ENCODE measurements at regions of chr7 and their contacts with region 1.

Region 1: GRCh38 chr7:117673839-117674238 is 194.0 kb downstream of the CFTR start:
- DNase-seq: peak; percentile 37
- H3K4me3 Mint-ChIP-seq: no peak overlapping the region
- H3K27ac Mint-ChIP-seq: no peak overlapping the region
- H3K4me1 Mint-ChIP-seq: no peaks in the 10 kb centered on the region
- H3K27me3 Mint-ChIP-seq: peaks cover 39% of the 10 kb centered on the region
- CTCF ChIP-seq: peak; percentile 21

Region 2: GRCh38 chr7:117399820-117400422 is 273.9 kb before region 1 on chr7:
- CTCF ChIA-PET with region 1: no interaction called
- POLR2A ChIA-PET with region 1: no interaction called
- intact Hi-C with region 1: loop called (anchors 10 kb)
- DNase-seq: no peak
- H3K4me3 Mint-ChIP-seq: no peak overlapping the region
- H3K27ac Mint-ChIP-seq: no peak overlapping the region
- H3K4me1 Mint-ChIP-seq: no peaks in the 10 kb centered on the region
- H3K27me3 Mint-ChIP-seq: peaks cover 55% of the 10 kb centered on the region
- CTCF ChIP-seq: peak; percentile 40

Region 3: DNA sequence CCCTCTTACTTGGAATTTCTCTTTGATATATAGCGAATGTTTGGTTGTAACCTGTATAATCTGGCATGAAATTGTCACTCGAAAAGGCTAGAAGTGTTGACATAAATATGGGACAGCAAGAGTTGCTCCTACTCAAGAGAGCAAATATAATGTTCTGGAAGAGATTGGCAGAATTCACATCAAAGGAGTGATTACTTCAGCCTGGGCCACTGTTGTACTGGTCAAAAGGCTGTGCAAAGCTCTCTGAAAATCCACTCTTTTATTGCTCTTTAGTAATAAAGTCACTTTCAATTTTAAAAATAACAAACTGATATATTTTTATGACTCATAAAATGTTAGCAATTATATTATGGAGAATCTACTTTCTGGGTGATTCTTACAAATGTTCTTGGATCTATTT is 135.8 kb before region 1 on chr7:
- CTCF ChIA-PET with region 1: no interaction called
- POLR2A ChIA-PET with region 1: no interaction called
- intact Hi-C with region 1: no loop called
- DNase-seq: no peak
- H3K4me3 Mint-ChIP-seq: no peak overlapping the region
- H3K27ac Mint-ChIP-seq: no peak overlapping the region
- H3K4me1 Mint-ChIP-seq: no peaks in the 10 kb centered on the region
- H3K27me3 Mint-ChIP-seq: peaks cover 28% of the 10 kb centered on the region
- CTCF ChIP-seq: no peak

Region 4: DNA sequence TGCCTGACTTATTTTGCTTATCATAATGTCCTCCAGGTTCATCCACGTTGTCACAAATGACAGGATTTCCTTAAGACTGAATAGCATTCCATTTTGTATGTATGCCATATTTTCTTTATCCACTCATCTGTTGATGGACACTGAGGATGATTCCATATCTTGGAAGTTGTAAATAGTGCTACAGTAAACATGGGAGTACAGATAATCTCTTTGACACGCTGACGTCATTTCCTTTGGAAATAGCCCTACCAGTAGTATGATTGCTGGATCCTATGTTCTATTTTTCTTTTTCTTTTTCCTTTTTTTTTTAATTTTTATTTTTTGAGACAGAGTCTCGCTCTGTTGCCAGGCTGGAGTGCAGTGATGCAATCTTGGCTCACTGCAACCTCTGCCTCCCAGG is 31.8 kb after region 1 on chr7:
- CTCF ChIA-PET with region 1: no interaction called
- POLR2A ChIA-PET with region 1: no interaction called
- intact Hi-C with region 1: no loop called
- DNase-seq: no peak
- H3K4me3 Mint-ChIP-seq: no peak overlapping the region
- H3K27ac Mint-ChIP-seq: no peak overlapping the region
- H3K4me1 Mint-ChIP-seq: no peaks in the 10 kb centered on the region
- H3K27me3 Mint-ChIP-seq: no peaks in the 10 kb centered on the region
- CTCF ChIP-seq: no peak

Region 5: DNA sequence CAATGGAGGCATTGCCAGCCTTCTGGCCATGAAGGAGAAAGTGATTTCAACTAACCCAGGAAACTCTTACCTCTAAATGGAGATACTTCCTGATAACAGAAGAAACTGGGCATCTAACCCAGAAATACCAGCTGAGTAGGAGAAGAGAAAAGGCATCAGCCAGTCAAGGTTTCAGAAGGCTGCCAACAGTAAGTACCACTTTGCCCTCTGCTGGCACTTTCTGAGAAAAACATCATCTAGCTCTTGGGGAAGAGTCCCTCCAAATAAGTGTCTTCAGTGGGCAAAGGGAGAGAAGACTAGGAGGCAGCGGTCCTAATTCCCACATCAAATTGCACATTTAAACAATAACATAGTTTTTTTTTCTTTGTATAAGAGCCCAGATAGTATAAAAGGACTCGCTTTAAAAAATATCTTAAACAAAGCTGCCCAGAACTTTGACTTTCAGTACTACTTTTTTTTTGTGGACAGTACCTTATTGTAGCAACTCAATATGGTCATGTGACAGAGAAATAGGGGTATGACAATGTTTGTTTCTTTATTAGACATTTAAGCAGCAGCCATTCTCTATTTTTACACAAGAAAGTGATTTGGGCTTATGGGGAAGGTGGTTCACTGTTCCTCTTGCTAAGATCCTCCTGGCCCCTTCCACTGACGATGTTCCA is 42.1 kb after region 1 on chr7:
- CTCF ChIA-PET with region 1: interaction called, 13 read pairs
- POLR2A ChIA-PET with region 1: no interaction called
- intact Hi-C with region 1: no loop called
- DNase-seq: peak; percentile 62
- H3K4me3 Mint-ChIP-seq: no peak overlapping the region
- H3K27ac Mint-ChIP-seq: no peak overlapping the region
- H3K4me1 Mint-ChIP-seq: no peaks in the 10 kb centered on the region
- H3K27me3 Mint-ChIP-seq: peaks cover 21% of the 10 kb centered on the region
- CTCF ChIP-seq: peak; percentile 48

Region 6: GRCh38 chr7:117982071-117983055 is 308.5 kb after region 1 on chr7:
- CTCF ChIA-PET with region 1: no interaction called
- POLR2A ChIA-PET with region 1: no interaction called
- intact Hi-C with region 1: no loop called
- DNase-seq: no peak
- H3K4me3 Mint-ChIP-seq: no peak overlapping the region
- H3K27ac Mint-ChIP-seq: no peak overlapping the region
- H3K4me1 Mint-ChIP-seq: peaks cover 5% of the 10 kb centered on the region
- H3K27me3 Mint-ChIP-seq: no peaks in the 10 kb centered on the region
- CTCF ChIP-seq: no peak

Region 7: GRCh38 chr7:118041251-118041878 is 367.5 kb after region 1 on chr7:
- CTCF ChIA-PET with region 1: no interaction called
- POLR2A ChIA-PET with region 1: no interaction called
- intact Hi-C with region 1: no loop called
- DNase-seq: peak; percentile 52
- H3K4me3 Mint-ChIP-seq: no peak overlapping the region
- H3K27ac Mint-ChIP-seq: no peak overlapping the region
- H3K4me1 Mint-ChIP-seq: no peaks in the 10 kb centered on the region
- H3K27me3 Mint-ChIP-seq: no peaks in the 10 kb centered on the region
- CTCF ChIP-seq: no peak

Measured in MCF 10A (cell line).